HCT116 (cell line): ENCODE measurements at regions of chr17 and their contacts with region 1.

Region 1: DNA sequence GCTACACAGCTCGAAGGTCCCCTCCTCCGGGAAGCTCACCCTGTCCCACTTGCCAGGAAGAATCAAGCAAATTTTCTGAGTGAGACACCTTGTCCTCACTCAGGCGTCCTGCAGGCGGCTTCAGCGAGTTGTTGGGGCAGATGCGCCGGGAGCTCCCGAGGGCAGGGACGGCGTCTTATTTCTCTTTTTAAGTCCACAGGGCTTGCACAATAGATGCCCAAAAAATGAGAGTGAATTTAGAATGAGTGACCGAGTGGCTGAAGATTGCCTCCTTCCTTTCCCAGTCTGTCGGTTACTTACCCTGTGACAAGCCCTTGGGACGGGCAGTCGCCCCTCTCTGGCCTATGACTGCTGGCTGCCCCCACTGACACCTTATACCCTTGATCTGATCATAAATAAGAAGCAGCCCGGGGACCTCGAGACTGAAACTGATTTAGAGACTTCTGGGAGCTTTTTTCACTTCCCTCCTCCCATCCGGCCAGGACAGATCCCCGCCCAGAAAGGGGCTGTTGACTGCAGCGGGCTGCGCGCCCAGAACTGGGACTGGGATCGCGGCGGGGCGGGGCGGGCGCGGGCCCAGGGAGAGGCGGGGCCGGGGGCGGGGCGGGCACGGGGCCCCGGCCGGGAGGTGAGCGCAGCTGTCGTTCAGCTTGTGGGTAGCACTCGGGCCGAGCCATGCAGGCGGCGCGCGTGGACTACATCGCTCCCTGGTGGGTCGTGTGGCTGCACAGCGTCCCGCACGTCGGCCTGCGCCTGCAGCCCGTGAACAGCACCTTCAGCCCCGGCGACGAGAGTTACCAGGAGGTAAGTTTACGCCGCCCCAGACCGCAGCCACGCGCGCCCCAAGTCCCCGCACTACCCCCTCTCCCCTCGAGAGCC is at the start of gene TTYH2:
- DNase-seq: peak; percentile 81
- ATAC-seq: peak; percentile 74
- H3K4me3 ChIP-seq: peak within 1 kb of the TSS; percentile 75 to 77
- H3K27ac ChIP-seq: peak within 1 kb of the TSS; percentile 76
- H3K4me1 ChIP-seq: peaks cover 25 to 57% of the 10 kb centered on the region in 2 experiments
- H3K27me3 ChIP-seq: no peaks in the 10 kb centered on the region
- CTCF ChIP-seq: peak in 2 of 3 experiments; percentile 46 to 51; a peak in 4 of 6 replicates
- POLR2A ChIP-seq: peak; percentile 50
- RAD21 ChIP-seq: no peak
- total RNA-seq, gene TTYH2: 10.8 TPM

Region 2: GRCh38 chr17:74259667-74260524 is 46.7 kb after region 1 on chr17:
- CTCF ChIA-PET with region 1: no interaction called
- POLR2A ChIA-PET with region 1: no interaction called
- RAD21 ChIA-PET with region 1: no interaction called
- intact Hi-C with region 1: no loop called
- DNase-seq: no peak
- ATAC-seq: peak; percentile 53; the same call in 1 of the 2 replicates
- H3K4me3 ChIP-seq: no peak overlapping the region
- H3K27ac ChIP-seq: no peak overlapping the region
- H3K4me1 ChIP-seq: no peaks in the 10 kb centered on the region; a peak in 1 of 4 replicates
- H3K27me3 ChIP-seq: no peaks in the 10 kb centered on the region
- CTCF ChIP-seq: no peak
- POLR2A ChIP-seq: no peak
- RAD21 ChIP-seq: no peak

Region 3: GRCh38 chr17:74354123-74354522 is 141.0 kb after region 1 on chr17:
- CTCF ChIA-PET with region 1: no interaction called
- POLR2A ChIA-PET with region 1: interaction called, 3 read pairs
- RAD21 ChIA-PET with region 1: no interaction called
- intact Hi-C with region 1: loop called (anchors 5 kb)
- DNase-seq: peak; percentile 74
- ATAC-seq: peak; percentile 98
- H3K4me3 ChIP-seq: peak overlapping the region; percentile 19 to 33; a peak in 3 of 4 replicates
- H3K27ac ChIP-seq: no peak overlapping the region; the same call in 1 of the 2 replicates
- H3K4me1 ChIP-seq: peaks cover 7 to 14% of the 10 kb centered on the region in 2 experiments; a peak in 3 of 4 replicates
- H3K27me3 ChIP-seq: no peaks in the 10 kb centered on the region
- CTCF ChIP-seq: peak; percentile 100
- POLR2A ChIP-seq: no peak
- RAD21 ChIP-seq: peak; percentile 75

Region 4: DNA sequence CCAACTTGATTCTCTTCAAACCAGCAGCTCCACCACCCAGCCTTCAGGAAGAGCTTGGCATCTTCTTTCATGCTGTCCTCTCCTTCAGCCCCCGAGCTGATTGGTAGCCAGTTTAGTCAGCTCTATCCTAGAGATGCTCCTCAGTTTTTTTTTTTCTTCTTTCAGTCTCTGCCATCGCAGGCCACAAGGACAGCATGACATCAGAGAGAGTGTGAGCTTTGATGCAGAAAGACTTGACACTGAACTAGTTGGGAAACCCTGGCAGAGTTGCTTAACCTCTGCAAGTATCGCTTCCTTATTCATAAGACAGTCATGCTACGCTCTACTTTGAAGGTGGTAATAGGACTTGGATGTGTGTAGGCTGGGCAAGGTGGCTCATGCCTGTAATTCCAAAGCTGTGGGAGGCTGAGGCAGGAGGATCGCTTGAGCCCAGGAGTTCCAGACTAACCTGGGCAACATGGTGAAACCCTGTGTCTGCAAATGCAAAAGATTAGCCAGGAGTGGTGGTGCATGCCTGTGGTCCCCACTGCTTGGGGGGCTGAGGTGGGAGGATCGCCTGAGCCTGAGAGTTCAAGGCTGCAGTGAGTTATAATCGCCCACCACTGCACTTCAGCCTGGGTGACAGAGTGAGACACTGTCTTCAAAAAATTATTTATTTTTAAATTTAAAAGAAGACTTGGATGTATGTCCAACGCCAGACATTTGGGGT is 315.5 kb after region 1 on chr17:
- CTCF ChIA-PET with region 1: interaction called, 3 read pairs
- POLR2A ChIA-PET with region 1: no interaction called
- RAD21 ChIA-PET with region 1: no interaction called
- intact Hi-C with region 1: loop called (anchors 5 kb)
- DNase-seq: no peak
- ATAC-seq: no peak
- H3K4me3 ChIP-seq: no peak overlapping the region
- H3K27ac ChIP-seq: no peak overlapping the region
- H3K4me1 ChIP-seq: no peaks in the 10 kb centered on the region
- H3K27me3 ChIP-seq: peaks cover 60% of the 10 kb centered on the region
- CTCF ChIP-seq: no peak
- POLR2A ChIP-seq: no peak
- RAD21 ChIP-seq: no peak